Naive thymus-derived CD4-positive, alpha-beta T cell (primary cell): ENCODE measurements at regions of chr17 and their contacts with region 1.

Region 1: GRCh38 chr17:1870592-1870991 is 40.8 kb downstream of the RPA1 start:
- DNase-seq: peak in 7 of 9 donors; percentile 60 to 86 (median 79)
- ATAC-seq: peak; percentile 81
- H3K4me3 ChIP-seq: no peak overlapping the region
- H3K4me3 Mint-ChIP-seq: peak overlapping the region; percentile 16 to 93 (median 82)
- H3K27ac ChIP-seq: peak overlapping the region; percentile 88
- H3K27ac Mint-ChIP-seq: peak overlapping the region; percentile 90 to 99 (median 96)
- H3K4me1 ChIP-seq: peaks cover 34 to 40% of the 10 kb centered on the region in 2 donors
- H3K4me1 Mint-ChIP-seq: peaks cover 43 to 79% (median 71%) of the 10 kb centered on the region in 7 donors
- H3K27me3 ChIP-seq: no peaks in the 10 kb centered on the region
- H3K27me3 Mint-ChIP-seq: no peaks in the 10 kb centered on the region

Region 2: DNA sequence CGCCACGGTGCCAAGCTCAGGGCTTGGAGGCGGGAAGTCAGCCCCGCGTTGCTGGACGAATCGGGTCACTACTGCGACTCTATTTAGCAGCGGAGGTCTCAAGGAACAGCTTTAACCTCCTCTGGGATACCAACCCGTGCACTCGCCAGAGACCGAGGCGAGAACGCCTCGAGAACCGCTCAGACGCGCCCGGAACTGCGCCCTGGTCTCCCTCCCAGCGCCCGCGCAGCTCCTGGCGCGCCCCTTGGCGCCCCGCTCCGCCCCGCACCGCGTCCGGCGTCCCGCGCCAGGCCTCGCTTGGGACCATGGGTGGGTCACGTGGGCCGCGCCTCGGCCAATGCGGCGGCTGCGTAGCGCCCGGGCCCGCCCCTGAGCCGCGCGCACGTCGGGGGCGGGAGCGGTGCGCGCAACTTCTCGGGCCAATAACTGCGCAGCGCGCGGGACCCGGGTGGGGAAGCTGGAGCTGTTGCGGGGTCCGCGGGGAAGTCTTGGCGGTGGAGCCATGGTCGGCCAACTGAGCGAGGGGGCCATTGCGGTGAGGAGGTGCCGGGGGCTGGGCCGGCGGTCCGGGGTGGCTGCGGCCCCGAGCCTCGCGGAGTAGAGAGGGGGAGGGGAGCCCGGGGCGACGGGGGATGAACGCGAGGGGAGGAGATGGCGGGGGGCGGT is 40.9 kb before region 1 on chr17 and contains the starts of genes RPA1 and SMYD4:
- CTCF ChIA-PET with region 1: interaction called, 6 read pairs
- POLR2A ChIA-PET with region 1: no interaction called
- intact Hi-C with region 1: loop called (anchors 1 to 2 kb)
- DNase-seq: peak; percentile 84 to 94 (median 89)
- ATAC-seq: peak; percentile 100
- H3K4me3 ChIP-seq: peak within 1 kb of the TSS; percentile 82
- H3K4me3 Mint-ChIP-seq: peak within 1 kb of the TSS; percentile 89 to 100 (median 98)
- H3K27ac ChIP-seq: peak within 1 kb of the TSS; percentile 86
- H3K27ac Mint-ChIP-seq: peak within 1 kb of the TSS; percentile 89 to 99 (median 95)
- H3K4me1 ChIP-seq: peaks cover 17 to 26% of the 10 kb centered on the region in 2 donors
- H3K4me1 Mint-ChIP-seq: peaks cover 39 to 80% (median 67%) of the 10 kb centered on the region in 7 donors
- H3K27me3 ChIP-seq: no peaks in the 10 kb centered on the region
- H3K27me3 Mint-ChIP-seq: no peaks in the 10 kb centered on the region
- total RNA-seq, gene RPA1: 57.8 to 264 (median 110) TPM
- total RNA-seq, gene SMYD4: 19.8 to 38.4 (median 32.5) TPM

Region 3: DNA sequence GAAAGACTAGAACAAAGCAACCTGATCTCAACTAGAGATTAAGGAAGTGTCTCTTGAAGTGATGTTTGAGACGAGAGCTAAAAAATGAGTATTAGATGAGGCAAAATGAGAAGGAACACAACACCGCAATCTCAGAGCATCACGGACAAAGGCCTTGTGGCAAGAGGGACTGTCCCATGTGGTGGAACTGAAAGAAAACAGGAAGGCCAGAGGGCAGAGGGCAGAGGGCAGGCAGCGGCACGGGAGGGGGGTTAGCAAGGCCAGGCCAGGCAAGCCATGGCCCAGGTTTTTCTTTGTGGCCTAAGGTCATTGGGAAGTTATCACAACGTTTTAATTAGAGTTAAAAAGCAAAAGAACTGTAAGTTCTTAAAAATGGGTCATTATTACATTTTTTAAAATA is 18.3 kb before region 1 on chr17:
- CTCF ChIA-PET with region 1: no interaction called
- POLR2A ChIA-PET with region 1: no interaction called
- intact Hi-C with region 1: no loop called
- DNase-seq: no peak
- ATAC-seq: no peak
- H3K4me3 ChIP-seq: no peak overlapping the region
- H3K4me3 Mint-ChIP-seq: no peak overlapping the region
- H3K27ac ChIP-seq: no peak overlapping the region
- H3K27ac Mint-ChIP-seq: peak overlapping the region in 2 of 9 donors; percentile 58 to 87
- H3K4me1 ChIP-seq: no peaks in the 10 kb centered on the region
- H3K4me1 Mint-ChIP-seq: peaks cover 0 to 20% (median 0%) of the 10 kb centered on the region in 7 donors
- H3K27me3 ChIP-seq: no peaks in the 10 kb centered on the region
- H3K27me3 Mint-ChIP-seq: no peaks in the 10 kb centered on the region

Region 4: DNA sequence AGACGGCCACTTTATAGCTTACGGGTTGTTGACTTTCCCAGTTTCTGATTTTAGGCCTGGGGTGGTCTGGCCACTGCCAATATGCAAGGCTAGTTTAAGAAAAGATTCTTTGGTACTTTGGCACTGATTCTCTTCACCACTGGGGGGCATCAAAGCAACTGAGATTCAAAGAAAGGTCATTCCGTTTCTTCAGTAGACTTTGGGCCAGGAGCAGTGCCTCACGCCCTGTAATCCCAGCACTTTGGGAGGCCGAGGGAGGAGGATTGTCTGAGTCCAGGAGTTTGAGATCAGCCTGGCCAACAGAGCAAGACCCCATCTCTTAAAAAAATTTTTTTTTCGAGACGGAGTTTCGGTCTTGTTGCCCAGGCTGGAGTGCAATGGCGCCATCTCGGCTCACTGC is 12.2 kb after region 1 on chr17:
- CTCF ChIA-PET with region 1: interaction called, 3 read pairs
- POLR2A ChIA-PET with region 1: interaction called, 3 read pairs
- intact Hi-C with region 1: loop called in 1 of 2 experiments (anchors 1 kb)
- DNase-seq: peak in 4 of 9 donors; percentile 9 to 30 (median 20)
- ATAC-seq: peak; percentile 46
- H3K4me3 ChIP-seq: no peak overlapping the region
- H3K4me3 Mint-ChIP-seq: no peak overlapping the region
- H3K27ac ChIP-seq: no peak overlapping the region
- H3K27ac Mint-ChIP-seq: peak overlapping the region in 3 of 9 donors; percentile 28 to 74 (median 47)
- H3K4me1 ChIP-seq: no peaks in the 10 kb centered on the region
- H3K4me1 Mint-ChIP-seq: peaks cover 0 to 31% (median 0%) of the 10 kb centered on the region in 7 donors
- H3K27me3 ChIP-seq: no peaks in the 10 kb centered on the region
- H3K27me3 Mint-ChIP-seq: no peaks in the 10 kb centered on the region